HEK293 (cell line): ENCODE measurements at regions of chrX and their contacts with region 1.

Region 1: DNA sequence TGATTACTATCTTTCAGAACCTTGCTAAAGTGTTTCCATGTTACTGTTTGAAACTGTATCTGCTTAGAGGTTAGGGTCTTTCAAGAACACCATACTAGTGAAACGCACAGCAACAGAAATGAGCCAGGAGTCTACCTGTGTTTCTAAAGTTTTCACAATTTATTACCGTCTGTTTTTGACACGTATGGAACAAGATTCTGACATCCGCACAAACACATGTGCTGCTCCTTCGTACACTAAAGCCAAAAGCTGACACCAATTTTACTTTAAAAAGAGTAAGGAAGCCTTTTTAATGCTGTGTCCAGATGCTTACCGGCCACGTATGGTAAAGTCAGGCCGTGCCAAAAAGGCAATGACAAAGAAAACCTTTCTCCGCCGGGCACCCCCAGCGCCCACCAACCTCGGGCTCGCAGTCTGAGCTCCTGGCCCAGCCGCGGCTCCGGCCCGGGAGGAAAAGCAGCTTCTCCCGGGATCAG is 532 bp downstream of the RPS4X start:
- H3K4me3 ChIP-seq: peak overlapping the region; percentile 82
- H3K27ac ChIP-seq: peak overlapping the region; percentile 99
- H3K4me1 ChIP-seq: peaks cover 10% of the 10 kb centered on the region
- CTCF ChIP-seq: no peak

Region 2: GRCh38 chrX:72045552-72046277 is 230.8 kb before region 1 on chrX:
- CTCF ChIA-PET with region 1: no interaction called
- POLR2A ChIA-PET with region 1: no interaction called
- H3K4me3 ChIP-seq: no peak overlapping the region
- H3K27ac ChIP-seq: peak overlapping the region; percentile 28
- H3K4me1 ChIP-seq: no peaks in the 10 kb centered on the region
- CTCF ChIP-seq: no peak

Region 3: DNA sequence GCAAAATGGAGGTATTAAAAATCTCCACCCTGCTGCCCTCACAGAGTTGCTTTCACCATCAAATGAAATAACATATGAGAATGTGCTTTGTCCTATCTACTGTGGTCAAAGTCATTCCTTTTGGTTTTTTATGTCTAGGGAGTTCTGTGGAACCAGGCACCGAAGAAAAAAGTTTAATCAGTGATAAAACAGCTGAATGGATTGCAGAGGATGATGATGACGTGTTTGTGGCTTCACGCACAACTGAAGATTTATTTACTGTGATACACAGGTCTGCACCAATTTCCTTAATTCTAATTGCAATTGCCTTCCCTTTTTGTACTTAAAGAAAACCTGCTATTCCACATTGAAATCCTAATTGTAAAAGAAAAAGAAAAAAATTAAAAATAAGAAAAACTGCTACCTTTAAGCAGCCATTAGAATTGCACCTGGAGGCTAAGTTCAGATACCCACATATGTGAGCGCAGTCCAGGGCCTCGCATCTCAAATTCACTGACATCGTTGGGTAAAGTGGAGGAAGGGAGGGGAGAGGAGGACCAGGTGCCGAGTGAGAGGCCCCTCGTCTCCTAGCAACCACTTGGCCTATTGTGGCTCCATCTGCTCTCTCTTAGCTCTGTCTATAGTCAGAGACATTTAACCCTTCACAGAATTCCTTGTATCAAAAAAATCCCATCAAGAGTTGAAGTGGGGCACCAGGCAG is 134.3 kb before region 1 on chrX:
- CTCF ChIA-PET with region 1: no interaction called
- POLR2A ChIA-PET with region 1: no interaction called
- H3K4me3 ChIP-seq: no peak overlapping the region
- H3K27ac ChIP-seq: no peak overlapping the region
- H3K4me1 ChIP-seq: no peaks in the 10 kb centered on the region
- CTCF ChIP-seq: no peak

Region 4: DNA sequence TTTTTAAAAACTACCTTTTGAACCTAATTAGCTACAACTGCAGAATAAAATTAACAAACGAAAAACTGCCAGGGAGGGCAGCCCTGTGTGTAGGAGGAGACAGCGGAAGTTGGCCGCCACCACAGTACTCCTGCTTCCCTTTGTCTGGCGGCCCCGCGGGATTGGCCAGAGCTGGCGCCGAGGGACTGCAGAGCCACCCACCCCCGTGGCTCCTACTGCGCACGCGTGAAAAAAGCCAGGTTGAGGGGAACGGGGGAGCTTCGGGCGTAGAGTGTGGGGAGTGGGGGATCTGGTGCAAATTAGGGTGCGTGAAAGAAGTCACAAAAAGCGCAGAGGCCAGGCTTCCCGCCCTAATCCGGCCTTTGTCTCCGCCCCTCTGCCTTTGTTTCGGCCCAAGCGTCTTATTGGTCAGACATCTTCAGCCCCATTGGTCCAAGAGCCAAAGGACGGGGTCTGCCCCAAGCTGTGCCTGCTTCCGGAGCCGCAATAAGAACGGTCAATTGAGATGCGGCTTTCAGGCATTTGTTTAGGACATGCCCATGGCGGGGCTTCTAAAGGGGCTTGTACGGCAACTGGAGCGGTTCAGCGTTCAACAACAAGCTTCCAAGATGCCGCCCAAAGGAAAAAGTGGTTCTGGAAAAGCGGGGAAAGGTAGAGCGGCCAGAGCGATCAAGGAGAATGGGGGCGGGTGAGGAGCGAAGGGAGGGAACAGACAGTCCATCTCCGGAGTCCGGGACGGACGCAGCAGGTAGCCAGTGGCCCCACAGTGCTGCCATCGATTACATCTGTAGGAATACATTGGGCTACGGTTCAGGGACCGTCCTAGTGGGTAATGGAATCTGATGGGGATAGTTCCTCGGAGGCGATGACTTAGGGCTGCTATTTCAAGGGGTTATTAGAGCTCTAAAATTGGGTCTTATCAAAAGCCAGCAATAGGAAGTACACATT is 95.1 kb before region 1 on chrX and contains the start of gene PIN4:
- CTCF ChIA-PET with region 1: interaction called, 6 read pairs
- POLR2A ChIA-PET with region 1: interaction called, 40 read pairs
- H3K4me3 ChIP-seq: peak within 1 kb of the TSS; percentile 68
- H3K27ac ChIP-seq: peak within 1 kb of the TSS; percentile 85
- H3K4me1 ChIP-seq: peaks cover 5% of the 10 kb centered on the region; the same call in 1 of the 2 replicates
- CTCF ChIP-seq: no peak

Region 5: GRCh38 chrX:72245461-72246089 is 30.9 kb before region 1 on chrX:
- CTCF ChIA-PET with region 1: interaction called, 44 read pairs
- POLR2A ChIA-PET with region 1: interaction called, 37 read pairs
- H3K4me3 ChIP-seq: no peak overlapping the region
- H3K27ac ChIP-seq: no peak overlapping the region
- H3K4me1 ChIP-seq: peaks cover 5% of the 10 kb centered on the region
- CTCF ChIP-seq: peak; percentile 75

Region 6: DNA sequence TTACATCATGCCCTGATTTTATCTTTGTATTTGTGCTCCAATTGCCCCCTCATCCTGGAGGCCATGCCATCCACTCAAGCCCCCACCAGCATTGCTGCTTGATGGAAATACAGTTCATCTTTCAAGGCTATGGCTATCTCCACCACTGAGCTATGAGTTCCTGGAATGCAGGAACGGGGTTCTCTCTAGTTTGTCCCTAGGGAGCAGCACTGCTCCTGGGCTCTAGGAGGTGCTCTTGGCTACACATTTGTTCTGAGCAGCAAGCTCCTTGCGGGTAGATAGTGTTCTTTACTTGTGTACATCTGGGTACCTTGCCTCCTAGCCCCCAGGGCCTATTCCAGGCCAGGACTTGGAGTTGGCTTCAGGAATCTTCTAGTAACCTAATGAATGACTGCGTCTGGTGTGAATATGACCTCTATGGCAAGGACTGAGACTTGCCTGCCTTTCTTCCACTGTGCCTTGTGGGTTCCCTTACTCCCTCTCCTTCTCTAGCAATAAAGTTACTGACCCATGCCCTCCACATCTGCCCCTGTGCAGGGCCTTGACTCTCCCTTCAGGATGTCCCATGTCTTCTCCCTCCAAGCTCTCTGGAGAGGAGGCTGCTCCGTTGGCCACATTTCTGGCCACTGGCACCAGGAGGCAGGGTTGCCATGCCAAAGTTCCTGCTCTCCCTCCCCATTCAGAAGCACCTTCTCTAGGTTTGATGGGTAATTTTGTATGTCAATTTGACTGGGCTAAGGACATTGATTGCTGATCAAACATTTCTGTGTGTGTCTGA is 21.6 kb after region 1 on chrX:
- CTCF ChIA-PET with region 1: interaction called, 54 read pairs
- POLR2A ChIA-PET with region 1: interaction called, 21 read pairs
- H3K4me3 ChIP-seq: no peak overlapping the region
- H3K27ac ChIP-seq: no peak overlapping the region
- H3K4me1 ChIP-seq: no peaks in the 10 kb centered on the region
- CTCF ChIP-seq: peak; percentile 11; the same call in 1 of the 2 replicates

Region 7: GRCh38 chrX:72540318-72540717 is 263.8 kb after region 1 on chrX:
- CTCF ChIA-PET with region 1: interaction called, 12 read pairs
- POLR2A ChIA-PET with region 1: interaction called, 7 read pairs
- H3K4me3 ChIP-seq: no peak overlapping the region
- H3K27ac ChIP-seq: no peak overlapping the region
- H3K4me1 ChIP-seq: no peaks in the 10 kb centered on the region
- CTCF ChIP-seq: no peak; the same call in 1 of the 2 replicates